ENCODE measurements at regions of chr6 and their contacts with region 1.

Region 1: GRCh38 chr6:135145063-135145800 is 35.9 kb upstream of the MYB start:
- DNase-seq: no peak
- H3K4me3 Mint-ChIP-seq: peak overlapping the region; percentile 55
- H3K27ac Mint-ChIP-seq: peak overlapping the region; percentile 83
- H3K4me1 Mint-ChIP-seq: peaks cover 80% of the 10 kb centered on the region
- H3K27me3 Mint-ChIP-seq: no peaks in the 10 kb centered on the region

Region 2: DNA sequence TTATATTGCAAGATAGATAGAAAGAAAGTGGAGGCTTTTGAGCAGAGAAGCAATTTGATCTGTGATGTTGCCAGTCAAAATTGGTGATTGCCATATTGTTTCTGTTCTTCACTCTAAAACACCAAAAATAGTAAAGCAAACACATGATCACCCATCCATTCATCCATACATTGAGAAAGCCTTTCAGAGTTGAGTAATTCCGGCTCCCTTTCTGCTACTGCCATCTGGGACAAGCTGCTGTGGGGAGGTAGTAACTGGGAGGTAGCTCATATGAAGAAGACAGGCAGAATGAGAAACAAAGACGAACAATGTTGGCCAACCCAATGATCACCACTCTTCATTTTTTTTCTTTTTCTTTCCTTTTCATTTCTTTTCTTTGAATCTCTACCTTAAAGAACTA is 39.5 kb before region 1 on chr6:
- intact Hi-C with region 1: no loop called
- DNase-seq: no peak
- H3K4me3 Mint-ChIP-seq: no peak overlapping the region
- H3K27ac Mint-ChIP-seq: no peak overlapping the region
- H3K4me1 Mint-ChIP-seq: peaks cover 56% of the 10 kb centered on the region
- H3K27me3 Mint-ChIP-seq: no peaks in the 10 kb centered on the region

Region 3: DNA sequence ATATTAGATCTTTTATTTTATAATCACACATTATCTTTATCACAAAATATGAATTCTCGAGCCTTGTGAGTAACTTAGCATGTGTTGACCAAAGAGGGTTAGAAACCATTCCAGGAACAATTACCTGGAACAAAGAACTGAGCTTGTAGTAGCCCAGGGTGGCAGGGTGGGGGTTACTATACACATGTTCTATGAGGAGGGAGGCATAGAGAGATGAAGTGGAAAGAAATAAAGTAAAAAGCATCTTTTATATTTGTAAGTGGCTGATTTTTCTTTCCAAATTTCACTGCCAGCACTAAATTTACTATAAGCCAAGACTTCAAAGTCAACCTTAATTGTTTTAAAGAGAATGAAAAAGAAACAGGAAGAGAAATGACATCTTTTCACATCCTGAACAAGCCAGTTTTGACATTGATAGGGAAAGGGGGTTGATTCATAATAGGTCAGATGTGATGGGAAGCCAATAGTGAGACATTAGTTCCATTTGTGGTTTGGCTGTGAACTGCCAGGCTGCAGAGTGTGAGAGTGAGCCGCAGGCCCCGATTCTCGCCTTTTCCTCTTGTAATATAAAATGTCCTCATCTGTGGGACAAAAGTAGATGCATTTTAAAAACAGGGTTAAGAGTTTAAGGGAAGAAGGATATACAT is 16.8 kb before region 1 on chr6:
- intact Hi-C with region 1: loop called (anchors 1 kb)
- DNase-seq: peak; percentile 53
- H3K4me3 Mint-ChIP-seq: peak overlapping the region; percentile 66
- H3K27ac Mint-ChIP-seq: peak overlapping the region; percentile 97
- H3K4me1 Mint-ChIP-seq: peaks cover 63% of the 10 kb centered on the region
- H3K27me3 Mint-ChIP-seq: no peaks in the 10 kb centered on the region

Region 4: GRCh38 chr6:135170849-135171248 is 25.6 kb after region 1 on chr6:
- intact Hi-C with region 1: no loop called
- DNase-seq: peak; percentile 16
- H3K4me3 Mint-ChIP-seq: peak overlapping the region; percentile 38
- H3K27ac Mint-ChIP-seq: peak overlapping the region; percentile 75
- H3K4me1 Mint-ChIP-seq: peaks cover 50% of the 10 kb centered on the region
- H3K27me3 Mint-ChIP-seq: no peaks in the 10 kb centered on the region

Region 5: GRCh38 chr6:135195522-135195921 is 50.3 kb after region 1 on chr6:
- intact Hi-C with region 1: loop called (anchors 1 kb)
- DNase-seq: no peak
- H3K4me3 Mint-ChIP-seq: peak overlapping the region; percentile 45
- H3K27ac Mint-ChIP-seq: peak overlapping the region; percentile 25
- H3K4me1 Mint-ChIP-seq: peaks cover 58% of the 10 kb centered on the region
- H3K27me3 Mint-ChIP-seq: no peaks in the 10 kb centered on the region

Region 6: DNA sequence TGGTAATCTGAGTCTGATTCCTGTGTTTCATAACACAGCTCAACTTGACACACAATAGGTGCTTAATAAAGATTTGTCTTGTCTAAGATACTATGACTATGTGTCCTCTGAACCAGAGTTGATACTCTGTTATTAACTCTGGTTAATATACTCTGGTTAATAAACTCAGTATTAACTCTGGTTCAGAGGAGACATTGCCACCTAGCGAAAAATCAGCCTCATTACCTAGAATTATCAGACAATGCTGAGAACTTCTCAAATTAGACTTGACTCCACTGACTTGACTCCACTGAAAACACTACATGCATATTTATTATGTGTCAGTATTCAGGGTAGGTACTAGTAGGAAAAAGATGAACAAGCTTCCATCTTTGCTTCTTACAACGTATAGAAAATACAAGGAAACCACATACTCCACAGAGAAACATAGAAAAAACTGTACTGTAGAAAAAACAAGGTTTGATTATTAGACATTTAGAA is 278.5 kb after region 1 on chr6:
- intact Hi-C with region 1: loop called (anchors 1 kb)
- DNase-seq: no peak
- H3K4me3 Mint-ChIP-seq: no peak overlapping the region
- H3K27ac Mint-ChIP-seq: peak overlapping the region; percentile 16
- H3K4me1 Mint-ChIP-seq: peaks cover 11% of the 10 kb centered on the region
- H3K27me3 Mint-ChIP-seq: no peaks in the 10 kb centered on the region

Measured in activated T-helper 1 cell treated with anti-CD3 and anti-CD28 coated beads, Interleukin-12 subunit alpha, Interleukin-12 subunit beta, Interleukin-2, Interleukin-4 antibody, amounts not matched to agents 30 ng/mL and 10 ng/mL and 1 ng/mL, durations not matched to agents 14 hours and 24 hours and 36 hours (primary cell).